Activated T-helper 1 cell treated with anti-CD3 and anti-CD28 coated beads, Interleukin-12 subunit alpha, Interleukin-12 subunit beta, Interleukin-2, Interleukin-4 antibody, amounts not matched to agents 30 ng/mL and 10 ng/mL and 1 ng/mL, durations not matched to agents 14 hours and 24 hours and 36 hours (primary cell): ENCODE measurements at regions of chr11 and their contacts with region 1.

Region 1: DNA sequence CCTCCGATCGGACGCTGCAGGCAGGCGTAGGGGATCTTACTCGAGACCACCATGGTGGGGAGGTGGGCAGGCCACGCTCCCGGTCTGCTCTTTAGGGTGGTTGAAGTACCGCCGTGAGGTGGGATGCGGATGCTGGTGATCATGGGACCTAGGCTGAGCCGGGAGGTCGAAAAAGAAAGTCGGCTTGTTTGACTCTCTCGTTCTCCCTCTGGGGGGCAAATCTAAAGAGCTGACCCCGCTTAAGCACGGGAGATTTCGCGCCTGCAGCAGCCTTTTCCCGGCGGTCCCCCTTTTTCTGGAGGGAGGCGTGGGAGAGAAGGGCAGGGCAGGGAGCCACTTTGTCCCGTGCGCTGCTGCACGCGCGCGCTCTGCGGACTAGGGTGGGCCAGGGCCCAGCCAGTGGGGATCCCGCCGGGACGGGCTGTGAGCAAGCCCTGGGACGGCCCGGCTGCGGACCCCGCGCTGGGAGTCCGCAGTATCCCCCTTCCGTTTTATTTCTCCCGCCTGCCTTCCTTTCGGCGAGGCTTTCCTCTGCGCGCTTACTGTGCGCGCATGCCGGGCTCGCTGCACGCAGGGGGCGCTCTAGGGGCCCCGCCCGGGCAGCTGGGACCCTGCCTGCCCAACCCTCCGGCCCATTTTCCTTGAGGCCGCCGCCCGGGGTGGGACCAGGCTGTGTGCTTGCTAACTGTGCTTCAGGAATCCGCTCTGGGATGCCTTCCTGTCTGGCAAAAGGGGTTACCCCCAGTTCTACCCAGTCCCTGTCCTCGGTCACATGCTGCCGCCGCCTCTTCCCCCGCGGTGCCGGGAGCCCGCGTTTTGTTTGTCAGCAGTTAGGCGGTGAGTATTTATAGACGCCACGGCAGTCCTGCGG is 81.0 kb downstream of the PRR5L start:
- DNase-seq: peak; percentile 63
- H3K4me3 Mint-ChIP-seq: peak overlapping the region; percentile 97
- H3K27ac Mint-ChIP-seq: peak overlapping the region; percentile 88
- H3K4me1 Mint-ChIP-seq: peaks cover 61% of the 10 kb centered on the region
- H3K27me3 Mint-ChIP-seq: peaks cover 33% of the 10 kb centered on the region

Region 2: DNA sequence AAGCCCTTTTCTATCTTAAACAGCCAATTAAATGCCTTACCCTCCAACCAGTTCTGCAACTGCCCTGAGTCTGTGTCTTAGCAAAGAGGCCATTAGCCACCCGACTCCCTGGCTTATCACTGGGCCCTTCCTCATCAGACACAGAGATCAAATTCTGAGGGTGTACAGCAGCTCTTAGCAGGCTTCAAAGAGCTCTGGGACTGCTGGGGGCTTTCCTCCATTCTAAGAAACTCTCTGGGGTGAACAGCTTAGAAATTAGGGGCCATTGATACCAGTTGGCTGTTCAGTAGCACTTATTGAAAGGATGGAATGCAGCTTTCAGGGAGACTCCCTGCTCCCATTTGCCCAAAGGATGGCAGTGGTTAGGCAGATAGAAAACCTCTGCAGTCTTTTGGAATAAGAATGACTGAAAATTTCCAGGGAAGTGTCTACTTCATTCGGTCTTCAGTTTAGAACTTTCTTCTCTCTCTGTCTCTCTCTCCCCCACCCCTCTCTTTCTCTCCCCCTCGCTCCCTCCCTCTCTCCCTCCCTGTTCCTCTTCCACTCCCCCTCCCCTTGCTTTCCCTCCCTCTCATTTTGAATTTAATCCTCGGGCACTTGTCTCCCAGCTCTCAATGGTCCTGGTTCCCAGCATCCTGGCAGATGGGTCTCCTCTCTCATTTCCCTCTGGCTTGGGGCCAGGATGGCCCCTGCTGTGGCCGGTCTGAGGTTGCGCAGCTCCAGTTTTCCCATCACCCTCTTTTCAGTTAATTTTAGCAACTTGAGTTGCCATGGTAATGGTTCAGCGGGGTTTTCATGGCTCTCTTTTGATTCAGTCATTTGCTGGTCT is 164.3 kb before region 1 on chr11:
- intact Hi-C with region 1: no loop called
- DNase-seq: no peak
- H3K4me3 Mint-ChIP-seq: no peak overlapping the region
- H3K27ac Mint-ChIP-seq: no peak overlapping the region
- H3K4me1 Mint-ChIP-seq: no peaks in the 10 kb centered on the region
- H3K27me3 Mint-ChIP-seq: peaks cover 4% of the 10 kb centered on the region

Region 3: DNA sequence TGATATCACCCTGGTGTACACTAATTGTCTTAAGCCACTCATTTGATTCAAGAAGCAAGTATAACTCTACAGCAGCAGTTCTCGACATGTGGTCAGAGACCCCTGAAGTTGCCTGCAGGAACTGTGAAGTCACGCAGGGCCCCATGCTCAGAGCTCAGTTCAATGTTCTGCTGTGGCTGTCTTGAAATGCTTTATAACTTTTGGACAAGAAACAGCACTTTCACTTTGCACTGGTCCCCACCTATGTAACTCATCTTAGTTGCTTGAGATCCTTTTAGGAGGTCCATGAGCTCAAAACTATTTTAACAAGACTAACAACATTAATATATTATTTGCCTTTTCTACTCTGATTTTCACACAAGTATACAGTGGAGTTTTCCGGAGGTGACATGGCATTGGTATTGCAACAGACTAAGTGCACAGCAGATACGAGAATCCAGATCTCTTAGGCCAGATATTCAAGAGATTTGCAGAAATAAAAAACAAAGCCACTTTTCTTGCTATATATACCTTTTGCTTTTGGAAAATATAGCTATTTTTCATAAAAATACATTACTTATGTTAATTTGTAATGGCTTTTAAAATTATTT is 16.2 kb before region 1 on chr11:
- intact Hi-C with region 1: loop called (anchors 1 kb)
- DNase-seq: no peak
- H3K4me3 Mint-ChIP-seq: no peak overlapping the region
- H3K27ac Mint-ChIP-seq: no peak overlapping the region
- H3K4me1 Mint-ChIP-seq: peaks cover 73% of the 10 kb centered on the region
- H3K27me3 Mint-ChIP-seq: peaks cover 40% of the 10 kb centered on the region

Region 4: DNA sequence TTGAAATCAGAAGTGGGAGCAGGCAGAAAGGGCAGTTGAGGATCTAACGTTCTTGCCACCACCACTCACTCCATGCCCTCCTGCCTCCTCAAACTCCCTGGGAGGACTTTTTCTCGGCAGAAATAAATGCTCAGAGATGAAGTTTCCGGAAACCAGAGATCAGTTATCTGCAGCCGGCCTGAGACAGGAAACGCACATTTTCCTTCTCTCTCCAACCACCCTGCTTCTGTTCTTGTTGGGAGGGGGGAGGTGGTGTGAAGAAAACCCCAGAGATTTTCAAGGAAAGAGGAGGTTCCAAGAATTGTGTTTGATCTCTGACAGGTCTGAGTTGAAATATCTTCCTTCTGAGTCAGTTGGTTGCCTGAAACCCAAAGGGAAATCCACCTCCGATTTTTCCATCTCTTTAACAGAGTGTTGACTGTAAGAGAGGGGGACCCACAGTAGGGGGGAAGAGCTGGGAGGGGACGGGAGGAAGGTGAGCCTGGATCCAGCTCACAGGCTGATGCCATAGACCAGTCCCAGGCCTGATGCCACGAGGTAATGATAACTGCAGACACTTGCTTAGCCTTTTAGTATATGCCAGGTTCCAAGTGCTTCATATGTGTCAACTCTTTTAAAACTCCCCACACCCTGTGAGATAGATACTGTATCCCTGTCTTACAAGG is 32.2 kb after region 1 on chr11:
- intact Hi-C with region 1: loop called (anchors 1 kb)
- DNase-seq: peak; percentile 49
- H3K4me3 Mint-ChIP-seq: peak overlapping the region; percentile 69
- H3K27ac Mint-ChIP-seq: peak overlapping the region; percentile 94
- H3K4me1 Mint-ChIP-seq: peaks cover 80% of the 10 kb centered on the region
- H3K27me3 Mint-ChIP-seq: no peaks in the 10 kb centered on the region

Region 5: DNA sequence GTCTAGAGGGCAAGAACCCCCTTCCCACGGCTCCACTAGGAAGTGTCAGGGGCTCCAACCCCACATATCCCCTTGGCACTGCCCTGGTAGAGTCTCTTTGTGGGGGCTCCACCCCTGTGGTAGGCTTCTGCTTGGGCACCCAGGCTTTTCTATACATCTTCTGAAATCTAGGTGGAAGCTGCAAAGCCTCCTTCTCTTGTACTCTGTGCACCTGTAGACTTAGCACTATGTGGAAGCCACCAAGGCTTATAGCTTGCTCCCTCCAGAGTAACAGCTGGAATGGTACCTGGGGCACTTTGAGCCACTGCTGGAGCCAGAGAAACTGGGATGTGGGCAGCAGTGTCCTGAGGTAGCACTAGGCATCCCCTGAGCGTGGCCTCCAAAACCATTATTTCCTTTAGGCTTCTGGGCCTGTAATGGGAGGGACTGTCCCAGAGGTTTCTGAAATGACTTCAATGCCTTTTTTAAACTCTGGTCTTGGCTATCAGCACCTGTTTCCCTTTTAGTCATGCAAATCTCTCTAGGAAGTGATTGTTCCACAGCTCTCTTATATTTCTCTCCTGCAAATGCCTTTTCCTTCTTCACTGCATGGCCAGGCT is 64.6 kb after region 1 on chr11:
- intact Hi-C with region 1: loop called (anchors 1 kb)
- DNase-seq: no peak
- H3K4me3 Mint-ChIP-seq: no peak overlapping the region
- H3K27ac Mint-ChIP-seq: peak overlapping the region; percentile 36
- H3K4me1 Mint-ChIP-seq: peaks cover 41% of the 10 kb centered on the region
- H3K27me3 Mint-ChIP-seq: no peaks in the 10 kb centered on the region

Region 6: DNA sequence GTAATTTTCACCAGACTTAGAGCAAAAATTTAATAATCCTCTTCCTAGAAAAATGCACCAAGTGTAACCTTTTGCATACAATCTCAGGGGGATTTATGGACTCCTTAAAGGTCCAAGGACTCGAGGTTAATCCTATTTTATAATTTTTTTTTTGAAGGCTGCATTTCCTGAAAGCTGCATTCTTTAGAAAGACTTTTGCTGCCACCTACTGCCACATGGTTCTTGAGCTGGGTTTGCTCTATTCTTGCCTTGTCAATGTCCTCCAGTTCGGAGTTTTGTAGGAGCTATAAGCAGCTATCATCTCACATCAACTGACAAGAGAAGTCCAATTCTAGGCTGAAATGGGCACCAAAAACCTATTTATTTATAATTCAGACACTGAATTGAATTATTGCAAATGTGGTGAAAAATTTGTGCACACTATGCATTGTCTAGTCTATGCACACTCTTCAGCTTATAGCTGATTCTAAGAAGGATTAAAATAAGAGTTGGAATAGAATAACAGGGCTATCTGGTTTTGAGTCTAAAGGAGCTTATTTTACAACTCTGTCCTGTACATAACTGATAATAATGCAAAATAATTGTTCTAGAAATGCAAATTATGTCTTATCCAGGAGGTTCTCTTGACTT is 101.7 kb after region 1 on chr11:
- intact Hi-C with region 1: loop called (anchors 1 kb)
- DNase-seq: peak; percentile 14
- H3K4me3 Mint-ChIP-seq: no peak overlapping the region
- H3K27ac Mint-ChIP-seq: no peak overlapping the region
- H3K4me1 Mint-ChIP-seq: peaks cover 11% of the 10 kb centered on the region
- H3K27me3 Mint-ChIP-seq: no peaks in the 10 kb centered on the region

Region 7: GRCh38 chr11:36500315-36500721 is 123.2 kb after region 1 on chr11:
- intact Hi-C with region 1: no loop called
- DNase-seq: no peak
- H3K4me3 Mint-ChIP-seq: no peak overlapping the region
- H3K27ac Mint-ChIP-seq: no peak overlapping the region
- H3K4me1 Mint-ChIP-seq: peaks cover 14% of the 10 kb centered on the region
- H3K27me3 Mint-ChIP-seq: no peaks in the 10 kb centered on the region